AG04449 (cell line): ENCODE measurements at regions of chr21 and their contacts with region 1.

Region 1: DNA sequence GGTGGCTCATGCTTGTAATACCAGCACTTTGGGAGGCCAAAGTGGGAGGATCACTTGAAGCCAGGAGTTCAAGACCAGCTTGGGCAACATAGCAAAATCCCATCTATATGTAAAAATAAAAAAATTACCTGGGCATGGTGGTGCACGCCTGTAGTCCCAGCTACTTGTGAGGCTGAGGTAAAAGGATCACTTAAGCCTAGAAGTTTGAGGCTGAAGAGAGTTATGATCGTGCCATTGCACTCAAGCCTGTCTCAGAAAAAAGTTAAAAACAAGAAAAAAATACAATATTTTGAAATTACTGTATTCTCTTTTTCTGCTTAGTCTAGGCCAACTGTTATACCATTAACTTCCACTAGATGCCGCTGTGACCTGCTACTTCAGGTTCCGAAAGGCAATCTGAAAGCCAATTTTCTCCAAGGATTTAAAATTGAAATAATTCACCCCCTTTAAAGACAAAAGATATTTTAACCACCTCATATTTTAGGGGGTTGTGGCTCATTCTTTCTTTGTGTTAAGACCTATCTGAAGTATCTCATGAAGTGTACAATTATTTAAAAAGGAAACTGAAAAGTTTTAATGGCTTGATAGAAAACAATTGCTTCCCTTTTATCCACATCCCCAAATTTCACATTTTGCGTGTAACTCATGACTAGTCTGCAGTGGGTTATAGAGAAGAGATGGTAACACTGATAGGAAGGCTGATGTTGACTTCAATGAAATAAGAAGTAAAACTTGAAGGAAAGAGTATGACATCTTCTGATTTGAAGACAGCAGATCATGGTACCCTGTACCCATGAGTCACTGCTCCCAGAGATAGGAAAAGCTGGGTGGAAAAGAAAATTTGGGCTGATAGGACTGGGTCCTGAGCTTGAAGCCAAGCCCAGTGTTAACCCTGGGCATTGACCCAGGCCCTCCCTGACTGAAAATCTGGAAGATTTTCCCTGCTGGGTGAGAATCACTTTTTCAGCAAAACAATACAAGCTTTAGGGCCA is 24.4 kb upstream of the CLDN14 start:
- DNase-seq: no peak
- H3K4me3 ChIP-seq: no peak overlapping the region
- CTCF ChIP-seq: peak; percentile 53

Region 2: DNA sequence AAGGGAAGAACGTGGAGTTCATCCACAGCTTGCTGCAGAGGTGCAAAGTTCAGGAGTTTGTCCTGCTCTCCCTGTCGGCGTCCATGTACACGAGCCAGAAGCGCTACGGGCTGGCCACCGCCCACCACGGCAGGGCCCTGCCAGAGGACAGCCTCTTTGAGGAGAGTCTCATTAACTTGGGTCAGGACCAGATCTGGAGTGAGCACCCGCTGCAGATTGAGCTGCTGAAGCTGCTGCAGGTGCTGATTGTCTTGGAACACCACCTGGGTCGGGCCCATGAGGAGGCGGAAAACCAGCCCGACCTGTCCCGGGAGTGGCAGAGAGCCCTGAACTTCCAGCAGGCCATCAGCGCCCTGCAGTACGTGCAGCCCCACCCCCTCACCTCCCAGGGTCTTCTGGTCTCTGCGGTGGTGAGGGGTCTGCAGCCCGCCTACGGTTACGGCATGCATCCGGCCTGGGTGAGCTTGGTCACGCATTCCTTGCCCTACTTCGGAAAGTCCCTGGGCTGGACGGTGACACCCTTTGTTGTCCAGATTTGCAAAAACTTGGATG is 258.2 kb before region 1 on chr21:
- CTCF ChIA-PET with region 1: no interaction called
- POLR2A ChIA-PET with region 1: no interaction called
- DNase-seq: no peak
- H3K4me3 ChIP-seq: no peak overlapping the region
- CTCF ChIP-seq: no peak

Region 3: GRCh38 chr21:36478207-36478701 is 26.1 kb before region 1 on chr21:
- CTCF ChIA-PET with region 1: interaction called, 16 read pairs
- POLR2A ChIA-PET with region 1: no interaction called
- DNase-seq: peak; percentile 72
- H3K4me3 ChIP-seq: peak overlapping the region; percentile 20
- CTCF ChIP-seq: no peak

Region 4: GRCh38 chr21:36491209-36491910 is 13.0 kb before region 1 on chr21:
- CTCF ChIA-PET with region 1: interaction called, 17 read pairs
- POLR2A ChIA-PET with region 1: no interaction called
- DNase-seq: peak; percentile 26
- H3K4me3 ChIP-seq: no peak overlapping the region
- CTCF ChIP-seq: no peak

Region 5: DNA sequence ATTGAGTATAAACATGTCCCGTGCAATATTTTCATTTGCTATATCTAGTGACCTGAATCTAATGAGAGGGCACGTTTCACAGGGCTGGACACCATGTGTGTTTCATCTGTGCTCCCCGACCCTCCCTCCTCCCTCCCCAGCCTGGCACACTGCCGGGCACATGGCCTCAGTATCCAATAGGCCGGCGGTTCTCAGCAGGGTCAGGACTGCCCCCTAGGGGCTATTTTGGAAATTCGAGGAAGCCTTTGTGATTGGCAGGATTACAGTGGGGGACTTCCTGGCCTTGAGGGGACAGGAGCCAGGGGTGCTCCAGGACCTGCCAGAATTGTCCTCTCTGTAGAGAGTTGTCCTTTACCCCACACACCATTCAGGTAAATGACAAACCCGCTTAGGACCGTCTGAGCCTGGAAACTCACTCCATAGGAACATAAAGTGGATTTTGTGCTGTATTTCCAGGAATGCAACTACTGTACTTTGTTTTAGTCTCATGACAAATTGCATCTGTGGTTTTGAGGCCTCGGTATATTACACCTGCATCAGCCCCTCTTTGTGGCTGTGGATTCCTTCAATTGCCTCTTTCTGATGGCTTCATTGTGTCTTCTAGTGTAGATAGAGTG is 85.1 kb after region 1 on chr21:
- CTCF ChIA-PET with region 1: interaction called, 20 read pairs
- POLR2A ChIA-PET with region 1: no interaction called
- DNase-seq: no peak
- H3K4me3 ChIP-seq: no peak overlapping the region
- CTCF ChIP-seq: peak; percentile 49

Region 6: GRCh38 chr21:36917471-36918158 is 413.3 kb after region 1 on chr21:
- CTCF ChIA-PET with region 1: interaction called, 12 read pairs
- POLR2A ChIA-PET with region 1: no interaction called
- DNase-seq: no peak
- H3K4me3 ChIP-seq: no peak overlapping the region
- CTCF ChIP-seq: peak; percentile 82